Pancreas (tissue), 10 donors: ENCODE measurements at regions of chr3 and their contacts with region 1.

Region 1: GRCh38 chr3:115469649-115470048 is 153.7 kb upstream of the GAP43 start:
- DNase-seq: no peak
- ATAC-seq: peak in 2 of 4 donors; percentile 24 to 35
- H3K4me3 ChIP-seq: no peak overlapping the region
- H3K27ac ChIP-seq: no peak overlapping the region
- H3K4me1 ChIP-seq: no peaks in the 10 kb centered on the region
- H3K27me3 ChIP-seq: no peaks in the 10 kb centered on the region
- CTCF ChIP-seq: no peak

Region 2: DNA sequence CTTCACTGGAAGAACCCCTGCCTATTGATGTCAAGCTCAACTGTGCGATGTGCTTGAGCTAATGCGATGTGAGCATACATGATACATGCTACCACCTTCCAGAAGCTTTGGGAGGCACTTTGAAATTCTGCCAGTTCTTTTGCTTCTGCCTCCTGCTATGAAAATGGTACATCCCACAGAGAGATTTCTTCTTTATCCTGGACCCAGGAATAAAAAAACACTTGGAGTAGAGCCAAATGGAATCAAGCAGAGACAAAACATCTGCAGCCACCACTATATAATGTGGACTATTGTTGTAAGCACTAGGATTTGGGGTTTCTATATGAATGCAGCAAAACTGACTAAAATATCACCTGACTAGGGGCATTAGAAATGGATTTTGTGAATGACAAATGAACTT is 33.7 kb after region 1 on chr3:
- intact Hi-C with region 1: loop called in 1 of 3 experiments (anchors 5 kb)
- DNase-seq: no peak
- ATAC-seq: no peak
- H3K4me3 ChIP-seq: no peak overlapping the region
- H3K27ac ChIP-seq: no peak overlapping the region
- H3K4me1 ChIP-seq: no peaks in the 10 kb centered on the region
- H3K27me3 ChIP-seq: no peaks in the 10 kb centered on the region
- CTCF ChIP-seq: no peak